Esophagus muscularis mucosa (tissue), 4 donors: ENCODE measurements at regions of chrX and their contacts with region 1.

Region 1: GRCh38 chrX:2500267-2501075 is at the starts of genes DHRSX and ZBED1:
- DNase-seq: no peak
- H3K4me3 ChIP-seq: peak within 1 kb of the TSS; percentile 77 to 92 (median 84)
- H3K27ac ChIP-seq: peak within 1 kb of the TSS; percentile 86 to 96 (median 91)
- H3K4me1 ChIP-seq: peaks cover 24 to 49% (median 45%) of the 10 kb centered on the region in 4 donors
- H3K27me3 ChIP-seq: no peaks in the 10 kb centered on the region
- CTCF ChIP-seq: peak in 1 of 3 experiments; percentile 29
- EP300 ChIP-seq: no peak
- POLR2A ChIP-seq: no peak
- total RNA-seq, gene DHRSX: 19.6 to 22.4 (median 21.0) TPM
- total RNA-seq, gene ZBED1: 32.8 to 44.8 (median 39.5) TPM

Region 2: GRCh38 chrX:1591102-1591900 is 909.2 kb before region 1 on chrX and contains the start of gene AKAP17A:
- intact Hi-C with region 1: loop called (anchors 10 kb)
- DNase-seq: peak; percentile 99
- H3K4me3 ChIP-seq: peak within 1 kb of the TSS; percentile 72 to 95 (median 91)
- H3K27ac ChIP-seq: peak within 1 kb of the TSS; percentile 83 to 93 (median 87)
- H3K4me1 ChIP-seq: peaks cover 14 to 40% (median 30%) of the 10 kb centered on the region in 4 donors
- H3K27me3 ChIP-seq: no peaks in the 10 kb centered on the region
- CTCF ChIP-seq: peak in 2 of 3 experiments; percentile 21 to 30
- EP300 ChIP-seq: no peak
- POLR2A ChIP-seq: peak; percentile 34
- total RNA-seq, gene AKAP17A: 23.4 to 36.8 (median 31.0) TPM

Region 3: GRCh38 chrX:3738509-3738908 is 1238.0 kb after region 1 on chrX:
- intact Hi-C with region 1: no loop called
- DNase-seq: no peak
- H3K4me3 ChIP-seq: no peak overlapping the region
- H3K27ac ChIP-seq: no peak overlapping the region
- H3K4me1 ChIP-seq: no peaks in the 10 kb centered on the region
- H3K27me3 ChIP-seq: no peaks in the 10 kb centered on the region
- CTCF ChIP-seq: no peak
- EP300 ChIP-seq: no peak
- POLR2A ChIP-seq: no peak